Activated naive CD4-positive, alpha-beta T cell treated with anti-CD3 and anti-CD28 coated beads for 36 hours (primary cell): ENCODE measurements at regions of chr17 and their contacts with region 1.

Region 1: GRCh38 chr17:78258323-78259191 is 27.1 kb downstream of the TMEM235 start:
- DNase-seq: peak; percentile 95
- H3K4me3 Mint-ChIP-seq: peak overlapping the region; percentile 81
- H3K27ac Mint-ChIP-seq: peak overlapping the region; percentile 88
- H3K4me1 Mint-ChIP-seq: peaks cover 59% of the 10 kb centered on the region
- H3K27me3 Mint-ChIP-seq: no peaks in the 10 kb centered on the region

Region 2: DNA sequence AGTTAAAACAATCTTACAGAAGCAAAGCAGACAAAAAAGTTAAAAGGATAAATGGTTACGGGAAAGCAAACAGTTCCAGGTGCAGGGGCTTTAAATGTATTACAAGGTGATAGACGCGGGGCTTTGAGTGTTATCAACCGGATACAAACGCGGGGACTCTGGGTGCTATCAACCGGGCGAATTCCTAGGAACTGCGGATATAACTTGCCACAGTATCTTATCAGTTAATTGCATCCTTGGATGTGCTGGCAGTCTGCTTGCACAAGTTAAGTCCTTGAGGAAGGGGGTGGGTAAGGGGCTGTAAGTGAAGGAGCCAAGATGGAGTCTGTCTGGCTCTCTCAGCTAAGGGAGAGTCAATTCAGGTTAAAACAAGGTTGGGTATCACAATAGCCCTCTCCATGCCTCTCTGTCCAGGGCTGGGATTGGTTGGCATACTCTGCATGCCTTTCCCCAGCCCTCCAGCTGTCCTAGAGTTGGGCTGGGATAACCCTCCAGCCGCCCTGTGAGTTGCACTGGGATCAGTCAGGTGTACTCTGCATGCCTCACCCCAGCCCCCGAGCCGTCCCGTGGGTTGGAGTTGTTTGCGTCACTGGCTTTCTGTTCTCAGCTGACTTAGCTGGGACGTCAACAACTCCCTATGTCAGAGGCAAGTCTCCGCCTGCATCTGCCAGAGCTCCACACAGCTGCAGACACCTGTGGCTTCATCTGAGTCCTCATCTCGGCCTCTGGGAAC is 13.8 kb after region 1 on chr17:
- CTCF ChIA-PET with region 1: interaction called, 4 read pairs
- intact Hi-C with region 1: loop called (anchors 2 kb)
- DNase-seq: peak; percentile 93
- H3K4me3 Mint-ChIP-seq: peak overlapping the region; percentile 51
- H3K27ac Mint-ChIP-seq: peak overlapping the region; percentile 47
- H3K4me1 Mint-ChIP-seq: peaks cover 40% of the 10 kb centered on the region
- H3K27me3 Mint-ChIP-seq: no peaks in the 10 kb centered on the region

Region 3: GRCh38 chr17:78415821-78416711 is 157.5 kb after region 1 on chr17:
- CTCF ChIA-PET with region 1: no interaction called
- intact Hi-C with region 1: loop called (anchors 2 kb)
- DNase-seq: no peak
- H3K4me3 Mint-ChIP-seq: peak overlapping the region; percentile 27
- H3K27ac Mint-ChIP-seq: peak overlapping the region; percentile 86
- H3K4me1 Mint-ChIP-seq: peaks cover 86% of the 10 kb centered on the region
- H3K27me3 Mint-ChIP-seq: no peaks in the 10 kb centered on the region